ENCODE measurements at regions of chr7 and their contacts with region 1.

Region 1: DNA sequence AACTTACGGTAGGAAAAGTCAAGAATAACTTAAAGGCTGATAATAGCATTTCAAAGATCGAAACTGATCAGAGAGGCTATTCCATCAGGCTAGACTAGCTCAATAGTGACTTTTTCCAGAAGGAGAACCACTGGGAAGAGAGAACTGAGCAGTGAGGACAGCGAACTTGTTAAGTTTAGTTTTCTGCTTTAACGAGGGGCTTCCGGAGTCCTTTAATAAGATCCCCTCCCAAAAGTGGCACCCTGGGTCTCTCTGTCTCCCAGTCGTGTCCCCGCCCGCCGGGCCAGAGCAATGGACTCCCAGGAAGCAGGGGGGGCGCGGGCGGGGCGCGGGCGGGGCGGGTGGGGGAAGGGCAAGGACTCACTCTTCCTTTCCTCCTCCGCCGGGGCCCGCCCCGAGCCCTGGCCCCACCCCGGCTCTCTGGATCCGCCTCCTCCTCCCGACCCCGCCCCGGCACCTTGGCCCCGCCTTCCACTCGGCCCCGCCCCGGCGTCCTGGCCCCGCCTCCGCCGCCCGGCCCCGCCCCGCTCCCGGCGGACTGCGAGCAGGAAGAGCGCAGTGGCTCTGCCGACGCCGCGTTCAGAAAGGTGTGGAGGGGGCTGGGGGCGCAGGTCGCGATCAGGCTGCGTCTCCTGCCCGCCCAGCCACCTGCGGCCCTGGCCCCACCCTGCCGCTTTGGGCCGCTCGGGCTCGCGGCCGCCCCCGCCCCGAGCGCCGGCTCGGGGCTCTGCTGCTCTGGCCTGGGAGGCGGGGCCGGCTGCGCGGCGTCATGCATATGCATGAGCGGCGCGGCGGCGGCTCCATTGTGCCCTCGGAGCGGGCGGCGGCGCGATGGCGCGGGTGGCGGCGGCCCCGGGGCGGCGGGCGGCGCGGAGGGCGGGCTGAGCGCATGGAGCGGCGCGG is at the start of gene ZMIZ2:
- DNase-seq: peak; percentile 92 to 96 (median 95)
- H3K4me3 ChIP-seq: peak within 1 kb of the TSS; percentile 59
- H3K27ac ChIP-seq: peak within 1 kb of the TSS; percentile 95 to 99
- H3K4me1 ChIP-seq: peaks cover 11% of the 10 kb centered on the region
- H3K27me3 ChIP-seq: no peaks in the 10 kb centered on the region
- CTCF ChIP-seq: no peak
- EP300 ChIP-seq: no peak
- POLR2A ChIP-seq: peak; percentile 42
- total RNA-seq, gene ZMIZ2: 20.0 to 85.5 (median 69.4) TPM

Region 2: GRCh38 chr7:44581879-44582603 is 166.3 kb before region 1 on chr7 and contains the start of gene TMED4:
- intact Hi-C with region 1: loop called in 1 of 4 experiments (anchors 10 kb)
- DNase-seq: peak; percentile 100
- H3K4me3 ChIP-seq: peak within 1 kb of the TSS; percentile 99
- H3K27ac ChIP-seq: peak within 1 kb of the TSS; percentile 85 to 98
- H3K4me1 ChIP-seq: peaks cover 7% of the 10 kb centered on the region
- H3K27me3 ChIP-seq: no peaks in the 10 kb centered on the region
- CTCF ChIP-seq: no peak
- EP300 ChIP-seq: no peak
- POLR2A ChIP-seq: peak; percentile 70
- total RNA-seq, gene TMED4: 74.9 to 155 (median 95.9) TPM

Region 3: GRCh38 chr7:44606450-44607254 is 141.6 kb before region 1 on chr7 and contains the start of gene OGDH:
- intact Hi-C with region 1: loop called in 1 of 4 experiments (anchors 2 kb)
- DNase-seq: peak; percentile 99
- H3K4me3 ChIP-seq: peak within 1 kb of the TSS; percentile 87
- H3K27ac ChIP-seq: peak within 1 kb of the TSS; percentile 95 to 98
- H3K4me1 ChIP-seq: peaks cover 2% of the 10 kb centered on the region
- H3K27me3 ChIP-seq: no peaks in the 10 kb centered on the region
- CTCF ChIP-seq: peak in 1 of 3 donors; percentile 49
- EP300 ChIP-seq: peak; percentile 83
- POLR2A ChIP-seq: peak; percentile 97
- total RNA-seq, gene OGDH: 25.9 to 84.6 (median 59.3) TPM

Region 4: GRCh38 chr7:44769776-44770662 is 21.7 kb after region 1 on chr7:
- intact Hi-C with region 1: loop called in 1 of 4 experiments (anchors 2 kb)
- DNase-seq: no peak
- H3K4me3 ChIP-seq: no peak overlapping the region
- H3K27ac ChIP-seq: peak overlapping the region in 1 of 2 donors; percentile 73
- H3K4me1 ChIP-seq: peaks cover 12% of the 10 kb centered on the region
- H3K27me3 ChIP-seq: no peaks in the 10 kb centered on the region
- CTCF ChIP-seq: no peak
- EP300 ChIP-seq: no peak
- POLR2A ChIP-seq: no peak

Region 5: DNA sequence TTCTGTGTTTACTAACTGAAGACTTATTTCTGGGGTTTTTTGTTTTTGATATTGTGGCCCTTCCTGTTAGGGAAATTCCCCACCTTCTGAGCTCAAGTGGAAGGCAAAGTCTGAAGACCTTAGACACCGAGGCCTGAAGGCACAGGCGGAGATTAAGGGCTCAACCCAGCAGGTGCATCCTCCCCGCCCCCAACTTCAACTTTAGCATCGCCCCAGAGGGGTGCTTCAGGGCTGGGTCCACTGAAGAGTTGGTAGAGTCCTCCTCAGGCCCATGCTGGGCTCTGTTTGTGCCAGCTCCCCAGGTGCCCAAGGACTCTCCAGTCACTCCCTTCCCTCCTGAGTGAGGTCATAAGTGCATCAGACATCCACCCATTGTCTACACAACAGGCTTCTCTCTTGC is 38.7 kb after region 1 on chr7:
- intact Hi-C with region 1: no loop called
- DNase-seq: no peak
- H3K4me3 ChIP-seq: no peak overlapping the region
- H3K27ac ChIP-seq: no peak overlapping the region
- H3K4me1 ChIP-seq: no peaks in the 10 kb centered on the region
- H3K27me3 ChIP-seq: no peaks in the 10 kb centered on the region
- CTCF ChIP-seq: no peak
- EP300 ChIP-seq: no peak
- POLR2A ChIP-seq: no peak

Region 6: GRCh38 chr7:44797329-44798251 is 49.3 kb after region 1 on chr7:
- intact Hi-C with region 1: loop called in 1 of 4 experiments (anchors 5 kb)
- DNase-seq: peak; percentile 80 to 88 (median 85)
- H3K4me3 ChIP-seq: peak overlapping the region; percentile 79
- H3K27ac ChIP-seq: peak overlapping the region; percentile 93 to 95
- H3K4me1 ChIP-seq: peaks cover 3% of the 10 kb centered on the region
- H3K27me3 ChIP-seq: no peaks in the 10 kb centered on the region
- CTCF ChIP-seq: peak in 1 of 3 donors; percentile 36
- EP300 ChIP-seq: no peak
- POLR2A ChIP-seq: peak; percentile 36

Region 7: GRCh38 chr7:45435846-45436245 is 687.5 kb after region 1 on chr7:
- intact Hi-C with region 1: no loop called
- DNase-seq: no peak
- H3K4me3 ChIP-seq: no peak overlapping the region
- H3K27ac ChIP-seq: no peak overlapping the region
- H3K4me1 ChIP-seq: no peaks in the 10 kb centered on the region
- H3K27me3 ChIP-seq: no peaks in the 10 kb centered on the region
- CTCF ChIP-seq: no peak
- EP300 ChIP-seq: no peak
- POLR2A ChIP-seq: no peak